Naive thymus-derived CD4-positive, alpha-beta T cell (primary cell): ENCODE measurements at regions of chr5 and their contacts with region 1.

Region 1: GRCh38 chr5:36151434-36152323 is at the starts of genes LMBRD2 and SKP2:
- DNase-seq: peak; percentile 88 to 99 (median 96)
- ATAC-seq: peak; percentile 100
- H3K4me3 ChIP-seq: peak within 1 kb of the TSS; percentile 87
- H3K4me3 Mint-ChIP-seq: peak within 1 kb of the TSS; percentile 89 to 98 (median 96)
- H3K27ac ChIP-seq: peak within 1 kb of the TSS; percentile 85
- H3K27ac Mint-ChIP-seq: peak within 1 kb of the TSS; percentile 76 to 97 (median 91)
- H3K4me1 ChIP-seq: peaks cover 24% of the 10 kb centered on the region in 2 donors
- H3K4me1 Mint-ChIP-seq: peaks cover 48 to 92% (median 77%) of the 10 kb centered on the region in 7 donors
- H3K27me3 ChIP-seq: no peaks in the 10 kb centered on the region
- H3K27me3 Mint-ChIP-seq: no peaks in the 10 kb centered on the region
- total RNA-seq, gene LMBRD2: 6.8 to 17.1 (median 12.3) TPM
- total RNA-seq, gene SKP2: 11.9 to 37.1 (median 23.3) TPM

Region 2: DNA sequence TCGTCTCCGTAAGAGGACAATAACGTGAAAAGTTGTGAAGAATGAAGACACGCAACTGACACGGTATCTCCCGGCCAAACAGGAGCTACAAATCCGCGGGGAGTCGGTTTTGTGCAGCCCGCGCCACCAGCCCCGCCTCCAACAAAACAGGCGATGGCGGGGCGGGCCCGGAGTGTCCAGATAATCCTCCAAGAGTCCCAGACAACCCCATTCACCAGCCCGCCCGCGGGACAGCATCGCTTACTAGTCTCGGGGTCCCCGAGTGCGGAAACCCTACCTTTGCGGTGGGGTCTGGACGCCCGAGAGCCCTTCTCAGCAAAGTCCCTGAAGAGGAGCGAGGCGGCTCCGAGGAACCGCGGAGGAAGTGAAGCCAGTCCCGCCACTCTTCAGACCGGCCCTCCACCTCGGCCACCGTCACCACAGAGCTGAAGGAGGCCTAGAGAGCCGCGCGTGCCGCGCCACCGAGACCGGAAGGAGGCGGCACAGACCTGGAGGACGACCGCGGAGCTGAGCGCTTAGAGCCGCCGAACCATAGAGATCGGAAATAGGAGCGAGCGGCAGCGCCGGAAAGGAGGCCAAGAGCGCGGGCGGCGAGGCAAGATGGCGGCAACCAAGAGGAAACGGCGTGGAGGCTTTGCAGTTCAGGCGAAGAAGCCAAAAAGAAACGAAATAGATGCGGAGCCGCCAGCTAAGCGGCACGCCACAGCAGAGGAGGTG is 1236.4 kb before region 1 on chr5 and contains the starts of genes BRIX1 and RAD1:
- CTCF ChIA-PET with region 1: no interaction called
- POLR2A ChIA-PET with region 1: interaction called, 5 read pairs
- intact Hi-C with region 1: loop called (anchors 1 kb)
- DNase-seq: peak; percentile 86 to 95 (median 92)
- ATAC-seq: peak; percentile 99
- H3K4me3 ChIP-seq: peak within 1 kb of the TSS; percentile 99
- H3K4me3 Mint-ChIP-seq: peak within 1 kb of the TSS in 3 of 10 donors; percentile 56 to 80 (median 60)
- H3K27ac ChIP-seq: peak within 1 kb of the TSS; percentile 84
- H3K27ac Mint-ChIP-seq: peak within 1 kb of the TSS in 2 of 9 donors; percentile 59 to 69
- H3K4me1 ChIP-seq: peaks cover 19 to 34% of the 10 kb centered on the region in 2 donors
- H3K4me1 Mint-ChIP-seq: peaks cover 17 to 41% (median 35%) of the 10 kb centered on the region in 7 donors
- H3K27me3 ChIP-seq: no peaks in the 10 kb centered on the region
- H3K27me3 Mint-ChIP-seq: no peaks in the 10 kb centered on the region
- total RNA-seq, gene BRIX1: 13.4 to 45.2 (median 26.8) TPM
- total RNA-seq, gene RAD1: 19.3 to 29.6 (median 24.6) TPM

Region 3: GRCh38 chr5:35617435-35618303 is 534.0 kb before region 1 on chr5 and contains the start of gene SPEF2:
- CTCF ChIA-PET with region 1: no interaction called
- POLR2A ChIA-PET with region 1: no interaction called
- intact Hi-C with region 1: loop called in 1 of 2 experiments (anchors 5 kb)
- DNase-seq: peak; percentile 57 to 76 (median 71)
- ATAC-seq: peak; percentile 95
- H3K4me3 ChIP-seq: peak within 1 kb of the TSS; percentile 95
- H3K4me3 Mint-ChIP-seq: peak within 1 kb of the TSS; percentile 91 to 96 (median 94)
- H3K27ac ChIP-seq: peak within 1 kb of the TSS; percentile 27
- H3K27ac Mint-ChIP-seq: peak within 1 kb of the TSS; percentile 79 to 96 (median 89)
- H3K4me1 ChIP-seq: peaks cover 4 to 12% of the 10 kb centered on the region in 2 donors
- H3K4me1 Mint-ChIP-seq: peaks cover 14 to 34% (median 26%) of the 10 kb centered on the region in 7 donors
- H3K27me3 ChIP-seq: no peaks in the 10 kb centered on the region
- H3K27me3 Mint-ChIP-seq: no peaks in the 10 kb centered on the region
- total RNA-seq, gene SPEF2: 7.1 to 13.5 (median 9.9) TPM

Region 4: GRCh38 chr5:35902046-35902676 is 249.5 kb before region 1 on chr5:
- CTCF ChIA-PET with region 1: no interaction called
- POLR2A ChIA-PET with region 1: no interaction called
- intact Hi-C with region 1: loop called in 1 of 2 experiments (anchors 10 kb)
- DNase-seq: no peak
- ATAC-seq: peak; percentile 48
- H3K4me3 ChIP-seq: no peak overlapping the region
- H3K4me3 Mint-ChIP-seq: peak overlapping the region in 1 of 10 donors; percentile 57
- H3K27ac ChIP-seq: no peak overlapping the region
- H3K27ac Mint-ChIP-seq: peak overlapping the region in 2 of 9 donors; percentile 25 to 40
- H3K4me1 ChIP-seq: peaks cover 10 to 12% of the 10 kb centered on the region in 2 donors
- H3K4me1 Mint-ChIP-seq: peaks cover 28 to 76% (median 63%) of the 10 kb centered on the region in 7 donors
- H3K27me3 ChIP-seq: no peaks in the 10 kb centered on the region
- H3K27me3 Mint-ChIP-seq: no peaks in the 10 kb centered on the region

Region 5: DNA sequence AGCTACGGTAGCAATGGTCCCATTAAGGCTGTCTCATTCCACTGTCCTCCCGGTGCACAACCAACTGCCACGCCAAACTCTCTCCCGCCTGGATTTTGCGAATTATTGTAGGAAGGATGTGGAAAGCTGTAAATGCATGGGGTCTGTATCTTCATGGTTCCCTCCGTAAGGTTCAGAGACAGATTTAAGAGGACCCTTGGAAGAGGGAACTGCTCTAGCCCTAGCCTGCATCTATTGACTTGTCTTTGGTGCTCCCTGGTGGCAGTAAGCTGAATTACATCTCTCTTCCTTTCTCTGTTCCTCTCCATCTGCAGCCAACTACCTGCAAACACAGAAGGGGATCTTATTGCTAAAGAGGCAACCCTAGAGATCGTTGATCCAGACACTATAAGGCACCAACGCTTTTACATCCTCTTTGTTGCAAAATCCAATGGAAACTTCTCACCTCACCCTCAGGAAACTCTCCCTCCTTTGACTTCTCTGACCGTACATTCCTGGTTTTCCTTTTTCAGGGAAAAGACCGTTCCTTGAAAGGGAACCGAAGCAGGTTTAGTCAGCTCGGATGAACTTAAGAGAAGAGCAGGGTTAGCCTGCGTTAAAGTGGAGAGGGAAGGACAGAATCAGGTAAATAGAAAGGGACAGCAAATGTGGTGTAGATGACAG is 225.2 kb before region 1 on chr5:
- CTCF ChIA-PET with region 1: no interaction called
- POLR2A ChIA-PET with region 1: no interaction called
- intact Hi-C with region 1: no loop called
- DNase-seq: peak; percentile 29 to 80 (median 73)
- ATAC-seq: peak; percentile 70
- H3K4me3 ChIP-seq: no peak overlapping the region
- H3K4me3 Mint-ChIP-seq: peak overlapping the region; percentile 35 to 87 (median 58)
- H3K27ac ChIP-seq: no peak overlapping the region
- H3K27ac Mint-ChIP-seq: peak overlapping the region in 3 of 9 donors; percentile 1 to 60 (median 7)
- H3K4me1 ChIP-seq: peaks cover 10 to 14% of the 10 kb centered on the region in 2 donors
- H3K4me1 Mint-ChIP-seq: peaks cover 18 to 49% (median 35%) of the 10 kb centered on the region in 7 donors
- H3K27me3 ChIP-seq: no peaks in the 10 kb centered on the region
- H3K27me3 Mint-ChIP-seq: peaks cover 0 to 13% (median 5%) of the 10 kb centered on the region in 5 donors

Region 6: GRCh38 chr5:36135994-36136393 is 15.7 kb before region 1 on chr5:
- CTCF ChIA-PET with region 1: no interaction called
- POLR2A ChIA-PET with region 1: no interaction called
- intact Hi-C with region 1: loop called (anchors 1 to 2 kb)
- DNase-seq: no peak
- ATAC-seq: no peak
- H3K4me3 ChIP-seq: no peak overlapping the region
- H3K4me3 Mint-ChIP-seq: no peak overlapping the region
- H3K27ac ChIP-seq: no peak overlapping the region
- H3K27ac Mint-ChIP-seq: no peak overlapping the region
- H3K4me1 ChIP-seq: no peaks in the 10 kb centered on the region
- H3K4me1 Mint-ChIP-seq: peaks cover 0 to 19% (median 13%) of the 10 kb centered on the region in 7 donors
- H3K27me3 ChIP-seq: no peaks in the 10 kb centered on the region
- H3K27me3 Mint-ChIP-seq: no peaks in the 10 kb centered on the region

Region 7: DNA sequence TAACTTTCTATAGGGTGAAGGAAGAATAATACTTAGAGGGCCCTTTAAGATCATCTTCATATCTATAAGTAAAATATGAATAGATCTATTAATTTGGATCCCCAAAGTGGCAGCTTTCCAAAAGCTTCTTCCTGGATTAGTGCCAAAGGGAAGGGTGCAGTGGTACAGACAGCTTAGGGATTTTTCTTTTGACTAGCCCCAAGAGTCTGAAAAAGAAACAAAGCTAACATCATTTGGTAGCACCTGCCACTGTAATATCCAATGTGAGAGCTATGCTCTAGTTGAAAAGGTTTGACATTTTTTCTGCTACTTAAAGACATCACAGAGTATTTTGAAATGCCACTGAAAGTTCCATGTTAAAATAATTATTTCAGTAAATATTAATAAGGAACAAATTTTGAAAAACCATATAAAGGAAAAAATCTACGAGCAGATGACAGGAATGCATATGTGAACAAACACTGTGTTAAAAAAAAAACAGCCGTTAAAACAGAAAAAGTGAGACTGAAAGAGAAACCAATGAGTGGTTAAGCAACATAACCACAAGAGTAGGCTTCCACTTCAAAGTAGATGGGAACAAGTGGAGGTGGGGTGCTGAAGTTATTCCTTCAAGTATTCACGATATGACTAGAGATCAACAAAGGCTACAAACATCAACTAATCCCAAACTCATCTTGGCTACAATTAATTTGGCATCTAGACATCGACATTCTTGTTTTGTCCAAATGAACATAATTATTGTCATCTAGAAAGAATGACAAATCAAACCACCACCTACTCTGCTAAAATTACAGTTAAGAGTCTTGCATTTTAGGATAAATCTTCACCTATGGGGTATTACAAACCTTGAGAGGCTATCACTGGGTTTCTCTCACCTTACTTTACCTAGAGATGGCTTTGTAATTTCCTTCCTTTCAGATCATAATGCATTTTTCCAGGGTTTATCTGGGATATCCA is 960.0 kb after region 1 on chr5:
- CTCF ChIA-PET with region 1: no interaction called
- POLR2A ChIA-PET with region 1: no interaction called
- intact Hi-C with region 1: loop called in 1 of 2 experiments (anchors 5 kb)
- DNase-seq: peak in 7 of 9 donors; percentile 42 to 73 (median 62)
- ATAC-seq: peak; percentile 86
- H3K4me3 ChIP-seq: peak overlapping the region; percentile 19
- H3K4me3 Mint-ChIP-seq: peak overlapping the region; percentile 42 to 83 (median 72)
- H3K27ac ChIP-seq: peak overlapping the region; percentile 47
- H3K27ac Mint-ChIP-seq: peak overlapping the region; percentile 6 to 88 (median 48)
- H3K4me1 ChIP-seq: peaks cover 14 to 30% of the 10 kb centered on the region in 2 donors
- H3K4me1 Mint-ChIP-seq: peaks cover 33 to 50% (median 43%) of the 10 kb centered on the region in 7 donors
- H3K27me3 ChIP-seq: no peaks in the 10 kb centered on the region
- H3K27me3 Mint-ChIP-seq: no peaks in the 10 kb centered on the region